ENCODE measurements at regions of chr20 and their contacts with region 1.

Region 1: DNA sequence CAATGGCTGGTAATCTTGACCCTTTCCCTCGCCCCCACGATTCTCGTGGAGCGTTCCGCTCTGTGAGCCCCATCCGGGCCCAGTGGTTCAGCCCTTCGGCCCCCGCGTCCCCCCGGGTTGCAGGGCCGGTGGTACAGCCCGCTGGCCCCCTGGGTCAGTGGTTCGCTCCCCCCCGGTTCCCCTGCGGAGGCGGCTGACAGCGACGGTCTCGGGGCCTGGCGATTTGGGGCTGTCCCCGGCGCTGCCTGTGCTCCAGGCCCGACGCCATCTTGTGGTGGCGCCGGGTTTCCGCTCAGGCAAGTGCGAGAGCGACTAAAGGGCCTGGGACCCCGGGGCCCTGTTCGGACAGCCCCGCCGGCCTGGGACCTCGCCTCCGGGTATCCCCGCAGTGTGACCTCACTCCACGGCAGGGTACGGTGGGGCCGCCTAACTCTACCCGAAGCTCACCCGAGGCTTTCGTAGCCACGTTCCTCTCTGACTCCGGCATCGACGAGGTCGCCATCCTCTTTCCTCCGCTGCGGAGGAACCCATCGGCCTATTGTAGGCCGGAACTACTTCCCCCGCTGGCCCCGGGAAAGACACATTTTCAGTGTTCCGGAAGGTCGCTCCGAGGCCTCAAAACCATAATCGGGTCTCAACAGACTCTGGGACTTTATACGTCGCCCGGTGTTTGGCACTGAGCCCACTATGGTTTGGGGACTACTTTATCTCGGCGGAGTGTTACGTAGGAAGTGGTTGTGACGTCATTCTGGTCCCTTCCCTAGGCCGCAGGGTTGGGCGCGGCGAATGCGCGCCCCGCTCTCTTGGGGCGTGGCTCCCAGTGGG is at the start of gene ZNF335:
- DNase-seq: peak; percentile 96
- ATAC-seq: peak; percentile 88
- H3K4me3 Mint-ChIP-seq: peak within 1 kb of the TSS; percentile 94
- H3K27ac Mint-ChIP-seq: peak within 1 kb of the TSS; percentile 98
- H3K4me1 Mint-ChIP-seq: peaks cover 15% of the 10 kb centered on the region
- H3K27me3 Mint-ChIP-seq: no peaks in the 10 kb centered on the region
- total RNA-seq, gene ZNF335: 27.4 to 28.9 TPM

Region 2: DNA sequence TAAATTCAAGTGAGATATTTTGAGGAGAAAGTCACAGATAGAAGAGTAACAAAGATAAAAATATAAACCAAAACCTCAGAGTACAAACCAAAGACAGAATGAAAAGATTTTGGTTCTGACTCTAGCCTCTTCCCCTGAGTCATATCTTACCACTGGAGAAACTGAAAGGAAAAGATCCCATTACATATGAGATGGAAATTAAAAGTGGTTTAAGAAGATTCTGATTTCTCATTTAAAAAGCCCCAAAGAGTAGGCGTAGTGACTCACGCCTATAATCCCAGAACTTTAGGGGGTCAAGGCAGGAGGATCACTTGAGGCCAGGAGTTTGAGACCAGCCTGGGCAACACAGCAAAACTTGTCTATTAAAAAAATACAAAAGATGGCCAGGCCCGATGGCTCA is 219.1 kb before region 1 on chr20:
- CTCF ChIA-PET with region 1: no interaction called
- POLR2A ChIA-PET with region 1: no interaction called
- intact Hi-C with region 1: loop called in 1 of 2 experiments (anchors 1 kb)
- DNase-seq: peak; percentile 51
- ATAC-seq: peak; percentile 76
- H3K4me3 Mint-ChIP-seq: no peak overlapping the region
- H3K27ac Mint-ChIP-seq: peak overlapping the region; percentile 63
- H3K4me1 Mint-ChIP-seq: peaks cover 28% of the 10 kb centered on the region
- H3K27me3 Mint-ChIP-seq: peaks cover 21% of the 10 kb centered on the region

Region 3: GRCh38 chr20:45880988-45881788 is 90.7 kb before region 1 on chr20 and contains the start of gene ZSWIM1:
- CTCF ChIA-PET with region 1: interaction called, 3 read pairs
- POLR2A ChIA-PET with region 1: interaction called, 3 read pairs
- intact Hi-C with region 1: loop called in 1 of 2 experiments (anchors 1 kb)
- DNase-seq: peak; percentile 99
- ATAC-seq: peak; percentile 98
- H3K4me3 Mint-ChIP-seq: peak within 1 kb of the TSS; percentile 94
- H3K27ac Mint-ChIP-seq: peak within 1 kb of the TSS; percentile 95
- H3K4me1 Mint-ChIP-seq: peaks cover 42% of the 10 kb centered on the region
- H3K27me3 Mint-ChIP-seq: no peaks in the 10 kb centered on the region
- total RNA-seq, gene ZSWIM1: 9.4 to 10.7 TPM

Region 4: GRCh38 chr20:45946149-45946970 is 25.5 kb before region 1 on chr20:
- CTCF ChIA-PET with region 1: interaction called, 4 read pairs
- POLR2A ChIA-PET with region 1: interaction called, 4 read pairs
- intact Hi-C with region 1: loop called in 1 of 2 experiments (anchors 2 kb)
- DNase-seq: peak; percentile 57
- ATAC-seq: peak; percentile 62
- H3K4me3 Mint-ChIP-seq: no peak overlapping the region
- H3K27ac Mint-ChIP-seq: peak overlapping the region; percentile 29
- H3K4me1 Mint-ChIP-seq: peaks cover 16% of the 10 kb centered on the region
- H3K27me3 Mint-ChIP-seq: no peaks in the 10 kb centered on the region

Region 5: GRCh38 chr20:46022411-46023147 is 50.7 kb after region 1 on chr20:
- CTCF ChIA-PET with region 1: interaction called, 3 read pairs
- POLR2A ChIA-PET with region 1: no interaction called
- intact Hi-C with region 1: loop called in 1 of 2 experiments (anchors 1 kb)
- DNase-seq: peak; percentile 88
- ATAC-seq: peak; percentile 60
- H3K4me3 Mint-ChIP-seq: peak overlapping the region; percentile 57
- H3K27ac Mint-ChIP-seq: no peak overlapping the region
- H3K4me1 Mint-ChIP-seq: peaks cover 17% of the 10 kb centered on the region
- H3K27me3 Mint-ChIP-seq: peaks cover 29% of the 10 kb centered on the region

Region 6: DNA sequence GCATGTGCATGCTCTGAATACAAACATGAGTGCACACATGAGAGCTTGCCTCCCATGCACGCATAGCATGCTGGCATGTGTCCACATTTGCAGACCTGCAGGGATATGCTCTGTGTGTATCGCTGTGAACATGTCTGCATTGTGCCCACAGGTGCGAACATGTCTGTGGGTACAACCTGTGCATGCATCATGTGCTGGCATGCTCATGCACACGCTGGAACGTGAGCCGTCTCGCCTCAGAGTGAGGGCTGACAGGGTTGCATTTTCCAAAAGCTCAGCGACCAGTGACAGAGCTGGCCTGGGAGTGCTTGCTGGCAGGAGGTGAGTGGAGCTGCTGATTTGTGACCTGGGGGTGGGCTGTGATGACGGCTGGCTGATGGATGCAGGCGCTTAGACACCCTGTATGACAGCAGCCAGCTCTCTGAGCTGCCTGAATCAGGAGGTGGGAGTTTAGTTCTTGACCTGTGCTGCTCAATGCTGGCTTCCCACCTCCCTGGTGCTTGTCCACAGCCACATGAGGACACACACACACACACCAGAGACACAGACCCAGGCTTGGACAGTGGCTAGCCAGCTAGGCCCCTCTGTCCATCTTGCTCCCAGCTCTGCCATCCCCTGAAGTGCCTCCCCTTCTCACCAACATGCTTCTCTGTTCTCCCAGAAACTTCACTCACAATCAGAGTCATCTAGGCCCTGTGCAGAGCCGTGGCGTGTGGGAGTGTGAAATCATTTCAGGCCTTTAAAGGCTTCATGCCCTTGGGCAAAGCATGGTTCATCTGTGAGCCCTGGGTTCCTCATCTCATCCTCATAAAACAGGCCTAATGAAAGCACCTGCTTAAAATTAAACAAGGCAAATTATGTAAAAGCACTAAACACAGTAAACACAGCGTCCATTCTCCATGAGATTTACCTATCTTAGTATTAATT is 197.6 kb after region 1 on chr20:
- CTCF ChIA-PET with region 1: no interaction called
- POLR2A ChIA-PET with region 1: no interaction called
- intact Hi-C with region 1: no loop called
- DNase-seq: no peak
- ATAC-seq: no peak
- H3K4me3 Mint-ChIP-seq: no peak overlapping the region
- H3K27ac Mint-ChIP-seq: no peak overlapping the region
- H3K4me1 Mint-ChIP-seq: no peaks in the 10 kb centered on the region
- H3K27me3 Mint-ChIP-seq: peaks cover 31% of the 10 kb centered on the region

Region 7: GRCh38 chr20:46307139-46307998 is 335.5 kb after region 1 on chr20:
- CTCF ChIA-PET with region 1: no interaction called
- POLR2A ChIA-PET with region 1: no interaction called
- intact Hi-C with region 1: no loop called
- DNase-seq: peak; percentile 87
- ATAC-seq: peak; percentile 90
- H3K4me3 Mint-ChIP-seq: no peak overlapping the region
- H3K27ac Mint-ChIP-seq: no peak overlapping the region
- H3K4me1 Mint-ChIP-seq: peaks cover 8% of the 10 kb centered on the region
- H3K27me3 Mint-ChIP-seq: peaks cover 61% of the 10 kb centered on the region

Region 8: DNA sequence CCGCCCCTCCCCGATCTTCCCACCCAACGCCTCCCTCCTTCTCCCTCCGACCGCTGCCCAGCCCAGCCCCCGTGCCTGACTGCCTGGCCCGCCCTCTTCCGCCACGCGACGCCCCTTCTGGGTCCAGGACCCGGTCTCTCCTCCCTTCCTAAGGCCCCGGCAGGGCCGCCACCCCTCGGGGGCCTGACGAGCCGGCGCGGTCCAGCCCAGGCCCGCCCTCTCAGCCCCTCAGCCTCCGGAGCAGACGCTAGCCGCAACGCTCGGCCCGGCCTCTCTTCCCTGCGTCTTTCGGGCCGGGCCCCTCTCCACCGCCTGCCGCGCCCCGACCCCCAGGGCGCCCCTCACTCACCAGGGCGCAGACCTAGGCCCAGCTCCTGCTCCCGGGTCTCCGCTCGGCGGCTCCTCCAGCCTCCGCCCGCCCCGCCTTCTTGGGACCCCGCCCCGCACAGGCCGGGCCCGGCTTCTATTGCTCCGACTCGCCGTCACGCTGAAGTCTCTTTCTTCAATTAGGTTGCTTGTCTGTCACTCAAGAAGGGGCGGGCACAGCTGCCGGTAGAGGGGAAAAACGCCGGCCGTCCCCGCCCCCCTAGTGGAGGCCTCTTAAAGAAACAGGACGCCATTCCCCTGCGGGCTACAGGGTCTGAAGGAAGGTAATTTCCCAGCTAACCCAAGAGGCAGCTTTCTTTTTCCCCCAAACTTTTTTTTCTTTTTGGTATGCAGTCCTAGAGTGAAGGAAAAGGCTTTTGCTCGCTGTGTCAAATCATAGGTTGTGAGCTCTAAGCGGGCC is 434.5 kb after region 1 on chr20 and contains the start of gene ELMO2:
- CTCF ChIA-PET with region 1: interaction called, 3 read pairs
- POLR2A ChIA-PET with region 1: no interaction called
- intact Hi-C with region 1: loop called (anchors 1 to 2 kb)
- DNase-seq: peak; percentile 98
- ATAC-seq: peak; percentile 85
- H3K4me3 Mint-ChIP-seq: peak within 1 kb of the TSS; percentile 88
- H3K27ac Mint-ChIP-seq: peak within 1 kb of the TSS; percentile 85
- H3K4me1 Mint-ChIP-seq: peaks cover 65% of the 10 kb centered on the region
- H3K27me3 Mint-ChIP-seq: no peaks in the 10 kb centered on the region
- total RNA-seq, gene ELMO2: 47.4 to 54.6 TPM